ENCODE measurements at regions of chr7 and their contacts with region 1.

Region 1: DNA sequence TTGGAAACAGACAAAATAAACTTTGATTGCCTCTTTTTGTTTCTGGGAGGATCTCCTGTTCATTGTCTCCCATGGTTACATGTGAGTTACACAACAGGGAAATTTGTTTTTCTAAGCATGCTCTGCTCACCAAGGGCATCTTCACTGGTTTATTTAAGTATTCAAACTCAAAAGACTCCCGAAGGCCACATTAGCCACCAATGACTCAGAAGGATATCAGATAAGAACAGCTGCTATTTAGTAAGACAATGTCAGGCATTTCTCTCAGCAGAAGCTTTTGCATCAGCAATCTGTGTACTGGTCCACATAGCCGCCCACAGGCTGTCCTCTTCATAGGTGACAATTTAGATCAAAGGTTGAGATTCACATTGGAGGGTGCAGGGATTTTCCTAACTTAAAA is 19.3 kb downstream of the OR6B1 start:
- ATAC-seq: peak in 4 of 8 experiments; percentile 17 to 77 (median 61)
- H3K4me3 ChIP-seq: no peak overlapping the region
- H3K27ac ChIP-seq: no peak overlapping the region
- H3K4me1 ChIP-seq: no peaks in the 10 kb centered on the region

Region 2: GRCh38 chr7:143901668-143902331 is 117.7 kb before region 1 on chr7 and contains the start of gene TCAF1:
- in situ Hi-C with region 1: loop called in 1 of 9 experiments (anchors 25 kb)
- ATAC-seq: peak; percentile 93 to 95 (median 94)
- H3K4me3 ChIP-seq: peak within 1 kb of the TSS; percentile 75 to 99 (median 80)
- H3K27ac ChIP-seq: peak within 1 kb of the TSS; percentile 84 to 85
- H3K4me1 ChIP-seq: peaks cover 9 to 15% of the 10 kb centered on the region in 2 donors
- total RNA-seq, gene TCAF1: 18.3 to 123 (median 83.9) TPM